ENCODE measurements at regions of chr5 and their contacts with region 1.

Region 1: DNA sequence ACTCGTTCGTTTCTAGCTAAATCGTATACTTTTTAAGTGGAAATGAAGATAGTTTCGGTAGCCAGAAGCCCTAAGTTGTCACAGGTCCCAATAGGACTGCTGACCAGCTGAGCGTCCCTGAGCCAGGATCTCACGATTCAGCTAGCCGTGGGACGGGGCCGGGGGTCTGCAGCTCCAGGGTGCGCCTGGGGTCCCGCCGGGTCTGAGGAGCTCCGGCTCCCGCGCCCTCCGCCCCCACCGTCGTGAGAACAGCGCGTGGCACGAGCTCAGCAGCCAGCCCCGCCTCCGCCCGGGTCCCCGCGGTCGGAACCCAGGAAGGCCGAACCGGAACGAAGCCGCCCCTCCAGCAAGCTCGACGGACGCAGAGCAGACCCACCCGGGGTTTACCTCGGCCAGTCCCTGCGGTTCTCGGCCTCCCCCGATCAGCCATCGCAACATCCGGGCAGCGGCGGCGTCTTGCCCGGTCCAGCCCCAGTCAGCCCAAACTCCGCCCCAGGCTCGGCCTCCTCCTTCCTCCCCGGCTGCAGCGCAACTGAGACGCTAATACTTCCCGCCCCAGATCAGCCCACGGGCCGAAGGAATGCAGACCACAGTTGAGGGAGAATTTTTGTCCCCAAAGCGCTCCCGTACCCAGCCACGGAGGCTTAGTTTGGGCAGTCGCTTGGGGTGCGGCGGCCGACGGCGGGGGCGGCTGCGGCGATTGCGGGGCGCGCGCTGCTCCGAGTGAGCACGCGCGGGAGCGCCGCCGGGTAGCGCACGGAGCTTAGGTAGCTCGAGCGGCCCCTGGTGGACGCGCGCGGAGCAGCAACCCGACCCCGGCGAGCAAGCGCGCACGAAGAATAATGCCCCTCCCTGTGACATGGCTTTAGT is at the start of gene WDR41:
- DNase-seq: peak; percentile 74 to 90 (median 85)
- ATAC-seq: peak; percentile 97
- H3K4me3 ChIP-seq: peak within 1 kb of the TSS; percentile 87
- H3K4me3 Mint-ChIP-seq: peak within 1 kb of the TSS; percentile 84 to 97 (median 90)
- H3K27ac ChIP-seq: peak within 1 kb of the TSS; percentile 82
- H3K27ac Mint-ChIP-seq: peak within 1 kb of the TSS; percentile 67 to 95 (median 88)
- H3K4me1 ChIP-seq: peaks cover 0 to 4% of the 10 kb centered on the region in 2 donors
- H3K4me1 Mint-ChIP-seq: peaks cover 6 to 28% (median 10%) of the 10 kb centered on the region in 7 donors
- H3K27me3 ChIP-seq: no peaks in the 10 kb centered on the region
- H3K27me3 Mint-ChIP-seq: peaks cover 8 to 27% (median 21%) of the 10 kb centered on the region in 5 donors
- total RNA-seq, gene WDR41: 6.0 to 23.8 (median 13.7) TPM

Region 2: DNA sequence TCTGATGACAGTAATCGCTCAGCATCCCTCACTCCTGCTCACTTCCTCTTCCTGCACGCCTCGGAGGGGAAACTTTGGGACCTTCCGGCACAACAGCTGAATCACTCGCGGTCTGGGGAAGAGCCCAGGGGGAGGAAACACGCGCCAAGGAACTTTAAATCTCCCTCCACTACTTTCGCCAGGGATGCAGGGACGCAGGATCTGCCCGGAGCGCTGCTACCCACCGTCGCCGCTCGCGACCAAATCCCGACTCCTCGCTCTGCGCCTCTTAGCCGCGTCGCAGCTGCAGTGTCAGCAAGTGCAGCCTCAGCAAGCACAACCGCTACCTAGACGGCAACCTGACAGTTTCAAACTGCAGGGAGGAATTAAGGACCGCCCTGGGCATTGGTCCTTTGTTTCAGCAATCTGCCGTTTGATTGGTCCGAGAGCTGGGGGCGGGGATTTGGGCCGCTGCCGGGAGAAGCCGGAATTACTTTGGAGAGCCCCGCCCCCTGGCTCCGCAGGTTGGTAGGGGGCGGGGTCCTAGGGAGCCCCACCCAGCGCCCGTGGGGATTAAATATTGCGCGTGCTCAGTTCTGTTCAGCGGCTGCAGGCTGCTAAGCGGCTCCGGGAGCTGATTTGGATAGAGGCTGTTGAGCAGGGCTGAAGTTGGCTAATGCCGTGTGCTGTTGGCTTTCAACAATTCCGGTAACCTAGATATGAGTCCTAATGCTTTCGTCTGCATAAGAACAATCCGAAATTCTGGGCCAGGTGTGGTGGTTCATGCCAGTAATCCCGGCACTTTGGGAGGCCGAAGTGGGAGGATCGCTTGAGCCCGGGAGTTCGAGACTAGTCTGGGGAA is 1774.7 kb before region 1 on chr5 and contains the start of gene POC5:
- CTCF ChIA-PET with region 1: no interaction called
- POLR2A ChIA-PET with region 1: no interaction called
- intact Hi-C with region 1: loop called in 1 of 2 experiments (anchors 2 kb)
- DNase-seq: peak; percentile 93 to 99 (median 98)
- ATAC-seq: peak; percentile 97
- H3K4me3 ChIP-seq: peak within 1 kb of the TSS; percentile 74
- H3K4me3 Mint-ChIP-seq: peak within 1 kb of the TSS; percentile 93 to 100 (median 99)
- H3K27ac ChIP-seq: peak within 1 kb of the TSS; percentile 78
- H3K27ac Mint-ChIP-seq: peak within 1 kb of the TSS; percentile 92 to 100 (median 97)
- H3K4me1 ChIP-seq: peaks cover 5 to 8% of the 10 kb centered on the region in 2 donors
- H3K4me1 Mint-ChIP-seq: peaks cover 26 to 47% (median 37%) of the 10 kb centered on the region in 7 donors
- H3K27me3 ChIP-seq: no peaks in the 10 kb centered on the region
- H3K27me3 Mint-ChIP-seq: peaks cover 0 to 10% (median 0%) of the 10 kb centered on the region in 5 donors
- total RNA-seq, gene POC5: 8.5 to 17.9 (median 15.0) TPM

Region 3: GRCh38 chr5:77066823-77067442 is 425.1 kb before region 1 on chr5:
- CTCF ChIA-PET with region 1: no interaction called
- POLR2A ChIA-PET with region 1: no interaction called
- intact Hi-C with region 1: loop called in 1 of 2 experiments (anchors 1 kb)
- DNase-seq: no peak
- ATAC-seq: peak; percentile 47
- H3K4me3 ChIP-seq: no peak overlapping the region
- H3K4me3 Mint-ChIP-seq: no peak overlapping the region
- H3K27ac ChIP-seq: no peak overlapping the region
- H3K27ac Mint-ChIP-seq: peak overlapping the region in 1 of 9 donors; percentile 7
- H3K4me1 ChIP-seq: no peaks in the 10 kb centered on the region
- H3K4me1 Mint-ChIP-seq: peaks cover 0 to 14% (median 6%) of the 10 kb centered on the region in 7 donors
- H3K27me3 ChIP-seq: no peaks in the 10 kb centered on the region
- H3K27me3 Mint-ChIP-seq: no peaks in the 10 kb centered on the region

Region 4: GRCh38 chr5:77143998-77144836 is 347.8 kb before region 1 on chr5:
- CTCF ChIA-PET with region 1: interaction called, 39 read pairs
- POLR2A ChIA-PET with region 1: interaction called, 5 read pairs
- intact Hi-C with region 1: loop called (anchors 1 kb)
- DNase-seq: peak in 8 of 9 donors; percentile 46 to 74 (median 62)
- ATAC-seq: peak; percentile 90
- H3K4me3 ChIP-seq: no peak overlapping the region
- H3K4me3 Mint-ChIP-seq: no peak overlapping the region
- H3K27ac ChIP-seq: no peak overlapping the region
- H3K27ac Mint-ChIP-seq: peak overlapping the region in 3 of 9 donors; percentile 8 to 80 (median 68)
- H3K4me1 ChIP-seq: no peaks in the 10 kb centered on the region
- H3K4me1 Mint-ChIP-seq: peaks cover 0 to 16% (median 11%) of the 10 kb centered on the region in 7 donors
- H3K27me3 ChIP-seq: no peaks in the 10 kb centered on the region
- H3K27me3 Mint-ChIP-seq: peaks cover 0 to 17% (median 9%) of the 10 kb centered on the region in 5 donors

Region 5: DNA sequence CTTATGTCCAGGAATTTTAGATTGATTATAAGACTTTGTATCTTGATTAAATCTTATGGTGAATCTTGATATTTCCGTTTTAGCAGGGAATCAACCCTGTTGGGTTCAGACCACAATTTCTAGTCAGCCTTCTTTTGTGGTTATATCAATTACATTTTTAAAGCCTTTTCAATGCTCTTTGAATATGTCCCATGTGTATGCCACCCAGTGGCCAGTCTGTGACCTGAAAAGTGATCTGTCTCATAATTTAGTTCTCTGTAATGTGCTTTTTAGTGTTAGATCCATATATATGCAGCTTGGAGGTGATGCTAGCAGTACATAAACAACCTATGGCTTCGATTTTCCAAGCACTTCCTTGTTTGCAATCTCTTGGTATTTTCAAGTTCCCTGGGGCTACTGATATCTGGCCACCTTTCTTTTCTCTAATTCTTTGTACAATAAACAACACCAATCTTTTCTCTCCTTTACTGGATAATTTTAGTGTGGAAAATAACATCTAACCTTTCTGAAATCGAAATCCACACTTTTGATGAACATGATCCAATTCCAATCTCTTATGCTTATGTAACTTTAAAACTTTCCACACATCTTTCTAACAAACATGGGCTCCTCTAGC is 252.8 kb before region 1 on chr5:
- CTCF ChIA-PET with region 1: no interaction called
- POLR2A ChIA-PET with region 1: no interaction called
- intact Hi-C with region 1: loop called in 1 of 2 experiments (anchors 10 kb)
- DNase-seq: peak in 4 of 9 donors; percentile 5 to 31 (median 17)
- ATAC-seq: peak; percentile 53
- H3K4me3 ChIP-seq: no peak overlapping the region
- H3K4me3 Mint-ChIP-seq: no peak overlapping the region
- H3K27ac ChIP-seq: no peak overlapping the region
- H3K27ac Mint-ChIP-seq: peak overlapping the region in 1 of 9 donors; percentile 37
- H3K4me1 ChIP-seq: no peaks in the 10 kb centered on the region
- H3K4me1 Mint-ChIP-seq: peaks cover 0 to 4% (median 0%) of the 10 kb centered on the region in 7 donors
- H3K27me3 ChIP-seq: no peaks in the 10 kb centered on the region
- H3K27me3 Mint-ChIP-seq: peaks cover 13 to 35% (median 23%) of the 10 kb centered on the region in 5 donors

Region 6: DNA sequence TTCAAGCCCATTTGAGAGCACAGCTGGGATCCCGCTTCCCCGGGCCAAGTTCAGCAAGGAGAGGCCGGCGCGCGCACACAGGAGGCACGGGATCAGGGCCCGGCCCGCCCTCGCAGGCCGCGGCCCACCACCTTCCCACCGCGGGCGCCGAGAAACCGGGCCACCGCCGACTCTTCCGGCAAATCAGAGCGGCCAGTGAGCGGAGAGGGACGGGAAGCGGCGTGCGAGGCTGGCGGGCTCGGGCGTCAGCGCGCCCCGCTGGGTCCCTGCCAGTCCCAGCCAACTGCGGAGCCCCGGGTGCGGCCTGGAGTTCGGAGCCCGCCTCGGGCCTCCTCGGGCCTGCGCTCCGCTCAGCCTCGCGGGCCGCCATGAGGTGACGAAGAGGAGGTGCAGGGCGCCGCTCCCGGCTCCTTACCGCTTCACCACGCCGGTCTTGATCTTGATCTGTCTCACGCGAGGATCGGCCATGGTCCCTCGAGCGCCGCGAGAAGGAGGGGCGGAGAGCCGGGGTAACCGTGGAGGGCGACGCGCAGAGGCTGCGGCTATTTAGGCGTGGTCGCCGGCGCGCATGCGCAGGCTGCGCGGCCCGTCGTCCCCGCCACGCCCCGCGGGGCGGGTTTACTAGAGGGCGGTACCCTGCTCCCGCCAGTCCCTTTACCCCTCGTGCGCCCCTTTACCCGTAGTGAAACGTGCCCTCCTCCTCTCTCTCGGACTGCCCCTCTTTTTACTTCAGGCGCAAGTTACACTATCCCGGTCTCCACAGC is 284.0 kb after region 1 on chr5 and contains the start of gene TBCA:
- CTCF ChIA-PET with region 1: no interaction called
- POLR2A ChIA-PET with region 1: interaction called, 3 read pairs
- intact Hi-C with region 1: loop called (anchors 1 kb)
- DNase-seq: peak; percentile 87 to 94 (median 93)
- ATAC-seq: peak; percentile 92
- H3K4me3 ChIP-seq: peak within 1 kb of the TSS; percentile 72
- H3K4me3 Mint-ChIP-seq: peak within 1 kb of the TSS; percentile 90 to 99 (median 94)
- H3K27ac ChIP-seq: peak within 1 kb of the TSS; percentile 97
- H3K27ac Mint-ChIP-seq: peak within 1 kb of the TSS; percentile 96 to 98 (median 97)
- H3K4me1 ChIP-seq: peaks cover 13 to 26% of the 10 kb centered on the region in 2 donors
- H3K4me1 Mint-ChIP-seq: peaks cover 32 to 60% (median 49%) of the 10 kb centered on the region in 7 donors
- H3K27me3 ChIP-seq: no peaks in the 10 kb centered on the region
- H3K27me3 Mint-ChIP-seq: no peaks in the 10 kb centered on the region
- total RNA-seq, gene TBCA: 71.3 to 137 (median 89.3) TPM

Region 7: GRCh38 chr5:78359831-78360673 is 868.0 kb after region 1 on chr5 and contains the start of gene SCAMP1:
- CTCF ChIA-PET with region 1: no interaction called
- POLR2A ChIA-PET with region 1: no interaction called
- intact Hi-C with region 1: loop called (anchors 1 to 2 kb)
- DNase-seq: peak; percentile 84 to 96 (median 93)
- ATAC-seq: peak; percentile 92
- H3K4me3 ChIP-seq: peak within 1 kb of the TSS; percentile 99
- H3K4me3 Mint-ChIP-seq: peak within 1 kb of the TSS; percentile 89 to 97 (median 94)
- H3K27ac ChIP-seq: peak within 1 kb of the TSS; percentile 85
- H3K27ac Mint-ChIP-seq: peak within 1 kb of the TSS; percentile 71 to 97 (median 96)
- H3K4me1 ChIP-seq: peaks cover 11 to 16% of the 10 kb centered on the region in 2 donors
- H3K4me1 Mint-ChIP-seq: peaks cover 27 to 64% (median 55%) of the 10 kb centered on the region in 7 donors
- H3K27me3 ChIP-seq: no peaks in the 10 kb centered on the region
- H3K27me3 Mint-ChIP-seq: no peaks in the 10 kb centered on the region
- total RNA-seq, gene SCAMP1: 16.9 to 27.6 (median 23.0) TPM